Caco-2 (cell line): ENCODE measurements at regions of chr12 and their contacts with region 1.

Region 1: GRCh38 chr12:81257947-81258551 is 180.2 kb downstream of the ACSS3 start:
- DNase-seq: peak in 1 of 2 experiments; percentile 64
- H3K4me3 ChIP-seq: no peak overlapping the region
- H3K4me3 Mint-ChIP-seq: no peak overlapping the region
- H3K27ac Mint-ChIP-seq: no peak overlapping the region
- H3K4me1 ChIP-seq: peaks cover 7% of the 10 kb centered on the region; the same call in 1 of the 2 replicates
- H3K4me1 Mint-ChIP-seq: no peaks in the 10 kb centered on the region
- H3K27me3 ChIP-seq: no peaks in the 10 kb centered on the region
- H3K27me3 Mint-ChIP-seq: no peaks in the 10 kb centered on the region
- CTCF ChIP-seq: peak; percentile 52 to 63

Region 2: DNA sequence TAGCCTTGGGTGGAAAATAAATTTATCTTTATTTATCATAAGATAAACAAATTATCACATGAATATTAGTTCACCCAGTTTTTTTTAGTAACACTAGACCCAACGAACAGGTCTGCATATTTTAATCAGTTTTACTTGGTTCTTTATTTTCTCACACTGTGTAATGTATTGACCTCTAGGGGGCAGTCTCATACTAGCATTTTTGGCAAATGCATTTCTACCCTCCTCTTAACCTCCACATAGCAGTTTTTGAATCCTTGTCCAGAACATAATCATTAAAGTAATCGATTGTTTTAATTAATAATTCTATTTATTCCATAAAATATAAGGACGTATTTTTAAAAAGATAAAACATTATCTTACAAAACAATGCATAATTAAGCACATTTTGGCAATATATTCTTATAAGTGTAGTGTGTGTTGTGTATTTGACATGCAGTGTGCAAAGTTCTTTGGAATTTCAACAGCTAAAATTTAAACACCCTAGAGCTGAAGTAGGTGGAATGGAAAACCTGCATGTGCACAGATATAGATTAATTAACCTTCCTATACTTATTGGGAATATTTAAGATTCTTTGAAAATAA is 845.6 kb before region 1 on chr12:
- CTCF ChIA-PET with region 1: no interaction called
- POLR2A ChIA-PET with region 1: no interaction called
- intact Hi-C with region 1: loop called (anchors 2 kb)
- DNase-seq: peak in 1 of 2 experiments; percentile 43
- H3K4me3 ChIP-seq: no peak overlapping the region
- H3K4me3 Mint-ChIP-seq: no peak overlapping the region
- H3K27ac Mint-ChIP-seq: no peak overlapping the region
- H3K4me1 ChIP-seq: no peaks in the 10 kb centered on the region
- H3K4me1 Mint-ChIP-seq: no peaks in the 10 kb centered on the region
- H3K27me3 ChIP-seq: no peaks in the 10 kb centered on the region
- H3K27me3 Mint-ChIP-seq: peaks cover 7% of the 10 kb centered on the region
- CTCF ChIP-seq: peak; percentile 68 to 71

Region 3: DNA sequence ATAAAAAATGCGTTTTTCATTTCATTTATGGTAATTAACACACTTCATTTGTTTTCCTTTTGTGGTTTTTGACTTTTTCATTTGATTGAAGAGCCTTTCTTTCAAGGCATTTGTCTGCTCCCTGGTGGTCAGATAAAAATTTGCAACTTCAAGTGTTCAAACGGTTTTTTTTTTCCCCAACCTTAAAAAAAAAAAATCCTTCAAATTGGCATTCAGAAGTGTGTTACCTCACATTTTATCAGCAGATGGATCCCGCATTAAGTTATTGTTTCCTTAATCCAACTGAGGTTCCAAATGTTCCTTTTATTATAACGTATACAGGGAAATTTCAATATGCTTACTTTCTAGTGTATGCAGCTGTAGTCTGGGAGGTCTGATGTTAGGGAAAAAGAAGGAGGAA is 494.2 kb before region 1 on chr12:
- CTCF ChIA-PET with region 1: no interaction called
- POLR2A ChIA-PET with region 1: no interaction called
- intact Hi-C with region 1: loop called (anchors 5 kb)
- DNase-seq: peak in 1 of 2 experiments; percentile 37
- H3K4me3 ChIP-seq: no peak overlapping the region
- H3K4me3 Mint-ChIP-seq: no peak overlapping the region
- H3K27ac Mint-ChIP-seq: no peak overlapping the region
- H3K4me1 ChIP-seq: no peaks in the 10 kb centered on the region
- H3K4me1 Mint-ChIP-seq: no peaks in the 10 kb centered on the region
- H3K27me3 ChIP-seq: no peaks in the 10 kb centered on the region
- H3K27me3 Mint-ChIP-seq: peaks cover 9% of the 10 kb centered on the region
- CTCF ChIP-seq: peak; percentile 62 to 64

Region 4: DNA sequence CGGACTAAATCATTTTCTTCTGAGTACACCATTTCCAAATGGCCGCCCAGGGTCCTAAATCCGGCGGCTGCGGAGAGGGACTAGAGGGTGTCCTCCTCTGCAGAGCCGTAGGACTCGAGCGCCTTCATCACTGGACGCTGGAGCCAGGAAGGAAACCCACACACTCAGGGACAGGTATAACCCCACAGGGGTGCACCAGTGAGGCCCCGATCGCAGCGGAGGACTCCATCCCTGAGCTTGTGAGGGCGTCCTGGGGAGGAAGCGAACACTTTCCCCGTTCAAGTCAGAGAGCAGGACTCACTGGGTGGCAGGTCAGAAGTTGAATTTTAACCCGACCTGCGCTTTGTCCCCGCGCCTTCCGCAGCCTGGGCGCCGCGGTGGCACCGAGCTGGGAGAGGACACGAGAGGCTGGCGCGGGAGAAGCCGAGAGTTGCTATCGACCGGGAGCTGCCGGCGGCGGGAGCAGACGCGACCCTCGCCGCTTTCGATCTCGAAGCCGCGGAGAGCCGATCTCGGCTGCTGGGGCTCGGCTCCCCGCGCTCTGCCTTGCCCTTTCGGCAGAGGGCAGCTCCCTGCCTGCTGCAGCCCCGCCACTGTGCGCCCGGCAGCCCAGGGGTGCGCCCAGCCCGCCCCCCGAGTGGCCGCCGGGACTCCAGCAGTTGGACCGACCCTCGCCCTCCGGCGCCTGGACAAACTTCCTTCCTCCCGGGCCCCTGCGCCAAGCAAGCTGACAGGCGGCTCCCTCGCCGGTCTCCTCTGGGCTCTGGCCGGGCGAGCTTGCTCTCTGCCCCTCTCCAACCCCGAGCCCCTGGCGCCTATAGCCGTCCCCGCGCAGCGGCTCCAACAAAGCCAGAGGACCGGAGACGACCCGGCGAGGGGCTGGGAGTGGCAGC is 321.3 kb before region 1 on chr12:
- CTCF ChIA-PET with region 1: interaction called, 3 read pairs
- POLR2A ChIA-PET with region 1: no interaction called
- intact Hi-C with region 1: loop called (anchors 5 kb)
- DNase-seq: peak; percentile 42 to 58
- H3K4me3 ChIP-seq: peak overlapping the region; percentile 84
- H3K4me3 Mint-ChIP-seq: peak overlapping the region; percentile 86
- H3K27ac Mint-ChIP-seq: peak overlapping the region; percentile 69
- H3K4me1 ChIP-seq: no peaks in the 10 kb centered on the region
- H3K4me1 Mint-ChIP-seq: peaks cover 7% of the 10 kb centered on the region
- H3K27me3 ChIP-seq: no peaks in the 10 kb centered on the region
- H3K27me3 Mint-ChIP-seq: peaks cover 2% of the 10 kb centered on the region
- CTCF ChIP-seq: peak in 1 of 2 experiments; percentile 3

Region 5: GRCh38 chr12:81128930-81129554 is 129.0 kb before region 1 on chr12:
- CTCF ChIA-PET with region 1: interaction called, 6 read pairs
- POLR2A ChIA-PET with region 1: no interaction called
- intact Hi-C with region 1: loop called (anchors 1 kb)
- DNase-seq: peak; percentile 48 to 58
- H3K4me3 ChIP-seq: no peak overlapping the region
- H3K4me3 Mint-ChIP-seq: no peak overlapping the region
- H3K27ac Mint-ChIP-seq: no peak overlapping the region
- H3K4me1 ChIP-seq: no peaks in the 10 kb centered on the region
- H3K4me1 Mint-ChIP-seq: no peaks in the 10 kb centered on the region
- H3K27me3 ChIP-seq: no peaks in the 10 kb centered on the region
- H3K27me3 Mint-ChIP-seq: no peaks in the 10 kb centered on the region
- CTCF ChIP-seq: peak; percentile 79 to 87

Region 6: DNA sequence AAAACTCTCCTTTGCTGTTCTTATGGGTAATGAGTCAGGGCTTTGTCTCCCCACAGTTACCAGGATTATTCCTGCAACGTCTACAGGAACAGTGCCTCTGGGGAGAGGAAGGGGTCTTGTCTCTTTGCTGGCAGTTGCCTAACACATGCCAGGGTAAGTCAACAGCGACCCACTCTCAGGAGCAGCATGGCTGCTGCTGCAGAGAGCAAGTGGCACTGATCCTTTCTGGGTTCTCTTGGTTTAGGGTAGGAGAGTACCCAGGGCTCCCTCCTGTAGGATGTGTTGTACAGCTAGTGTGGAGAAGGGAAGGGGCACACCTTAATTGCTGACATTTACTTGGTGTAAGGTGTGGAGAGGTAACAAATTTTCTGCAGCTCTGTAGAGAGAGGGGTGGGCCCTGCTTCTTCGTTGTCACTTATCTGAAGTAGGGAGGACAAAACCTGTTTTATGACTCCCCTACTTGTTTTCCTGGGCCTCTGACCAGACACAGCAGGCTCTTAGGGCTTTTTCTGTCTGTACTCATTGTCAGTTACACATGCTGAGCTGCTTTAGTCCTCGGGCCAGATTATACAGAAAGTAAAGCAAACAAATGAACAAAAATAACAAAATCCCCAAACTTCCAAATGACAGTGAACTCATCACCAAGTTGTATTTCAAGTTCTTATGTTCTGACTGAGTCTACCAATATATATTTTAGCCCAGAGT is 12.0 kb before region 1 on chr12:
- CTCF ChIA-PET with region 1: no interaction called
- POLR2A ChIA-PET with region 1: no interaction called
- intact Hi-C with region 1: no loop called
- DNase-seq: peak in 1 of 2 experiments; percentile 3
- H3K4me3 ChIP-seq: no peak overlapping the region
- H3K4me3 Mint-ChIP-seq: no peak overlapping the region
- H3K27ac Mint-ChIP-seq: no peak overlapping the region
- H3K4me1 ChIP-seq: no peaks in the 10 kb centered on the region
- H3K4me1 Mint-ChIP-seq: peaks cover 8% of the 10 kb centered on the region
- H3K27me3 ChIP-seq: no peaks in the 10 kb centered on the region
- H3K27me3 Mint-ChIP-seq: no peaks in the 10 kb centered on the region
- CTCF ChIP-seq: no peak

Region 7: GRCh38 chr12:81627336-81628189 is 369.5 kb after region 1 on chr12:
- CTCF ChIA-PET with region 1: no interaction called
- POLR2A ChIA-PET with region 1: no interaction called
- intact Hi-C with region 1: no loop called
- DNase-seq: peak in 1 of 2 experiments; percentile 35
- H3K4me3 ChIP-seq: no peak overlapping the region
- H3K4me3 Mint-ChIP-seq: no peak overlapping the region
- H3K27ac Mint-ChIP-seq: no peak overlapping the region
- H3K4me1 ChIP-seq: no peaks in the 10 kb centered on the region
- H3K4me1 Mint-ChIP-seq: no peaks in the 10 kb centered on the region
- H3K27me3 ChIP-seq: no peaks in the 10 kb centered on the region
- H3K27me3 Mint-ChIP-seq: no peaks in the 10 kb centered on the region
- CTCF ChIP-seq: peak; percentile 50 to 51